B cell (primary cell): ENCODE measurements at regions of chr1 and their contacts with region 1.

Region 1: DNA sequence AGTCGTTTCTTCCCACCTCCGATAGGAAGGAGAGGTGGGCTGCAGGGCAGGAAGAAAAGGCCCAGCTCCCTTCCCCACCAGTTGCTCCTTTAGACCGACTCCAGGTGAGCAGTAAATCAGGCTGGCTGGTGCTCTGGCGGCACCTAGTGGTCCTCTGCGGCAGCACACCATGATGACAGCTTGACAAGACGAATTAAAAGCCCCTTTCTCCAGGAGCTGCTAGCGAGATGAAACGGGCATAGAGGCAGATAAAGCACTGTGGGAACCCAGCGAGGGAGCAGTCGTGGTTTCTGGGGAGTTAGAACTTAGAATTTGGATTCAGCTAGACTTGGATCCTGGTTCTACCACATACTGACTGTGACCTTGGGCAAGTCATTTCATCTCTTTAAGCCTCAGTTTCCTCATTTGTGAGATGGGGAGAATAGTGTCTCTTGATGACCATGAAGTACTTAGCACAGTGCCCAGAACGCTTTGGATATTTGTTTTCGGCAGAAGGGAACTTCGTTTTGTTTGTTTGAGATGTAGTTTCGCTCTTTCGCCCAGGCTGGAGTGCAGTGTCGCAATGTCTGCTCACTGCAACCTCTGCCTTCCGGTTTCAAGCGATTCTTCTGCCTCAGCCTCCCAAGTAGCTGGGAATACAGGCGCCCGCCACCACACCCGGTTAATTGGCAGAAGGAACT is 21.8 kb upstream of the COL9A2 start:
- DNase-seq: peak; percentile 92
- ATAC-seq: peak; percentile 98
- H3K4me3 ChIP-seq: peak overlapping the region in 3 of 5 experiments; percentile 3 to 46 (median 6)
- H3K4me3 Mint-ChIP-seq: peak overlapping the region; percentile 38
- H3K27ac ChIP-seq: no peak overlapping the region
- H3K27ac Mint-ChIP-seq: peak overlapping the region; percentile 28
- H3K4me1 ChIP-seq: peaks cover 25 to 34% of the 10 kb centered on the region in 2 donors
- H3K4me1 Mint-ChIP-seq: peaks cover 39% of the 10 kb centered on the region
- H3K27me3 ChIP-seq: no peaks in the 10 kb centered on the region
- H3K27me3 Mint-ChIP-seq: no peaks in the 10 kb centered on the region
- CTCF ChIP-seq: peak; percentile 98

Region 2: DNA sequence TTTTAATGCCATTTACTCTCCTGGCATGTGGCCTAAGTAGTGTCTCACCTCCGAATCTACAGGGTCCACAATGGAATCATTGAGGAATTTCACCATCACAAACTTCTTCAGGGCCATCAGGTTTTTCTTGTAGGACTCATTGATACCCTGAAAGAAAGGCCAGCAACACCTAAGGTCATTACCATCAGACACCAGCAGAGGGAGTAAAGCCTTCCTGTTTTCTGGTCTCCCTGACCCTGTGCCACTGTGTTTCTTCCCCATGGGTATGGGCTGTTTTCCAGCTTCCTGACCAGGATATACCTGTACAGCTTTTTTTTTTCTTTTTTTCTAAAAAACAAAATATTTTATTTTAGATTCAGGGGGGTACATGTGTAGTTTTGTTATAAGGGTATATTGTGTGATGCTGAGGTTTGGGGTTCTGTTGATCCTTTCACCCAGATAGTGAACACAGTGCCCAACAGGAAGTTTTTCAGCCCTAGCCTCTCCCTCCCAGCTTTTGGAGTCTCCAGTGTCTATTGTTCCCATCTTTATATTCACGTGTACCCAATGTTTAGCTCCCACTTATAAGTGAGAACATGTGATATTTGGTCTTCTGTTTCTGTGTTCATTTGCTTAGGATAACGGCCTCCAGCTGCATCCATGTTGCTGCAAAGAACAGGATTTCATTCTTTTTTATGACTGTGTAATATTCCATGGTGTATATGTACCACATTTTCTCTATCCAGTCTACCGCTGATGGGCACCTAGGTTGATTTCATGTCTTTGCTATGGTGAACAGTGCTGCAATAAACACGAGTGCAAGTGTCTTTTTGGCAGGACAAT is 260.2 kb before region 1 on chr1:
- CTCF ChIA-PET with region 1: interaction called, 111 read pairs
- POLR2A ChIA-PET with region 1: no interaction called
- intact Hi-C with region 1: no loop called
- DNase-seq: peak; percentile 74
- ATAC-seq: peak; percentile 87
- H3K4me3 ChIP-seq: no peak overlapping the region
- H3K4me3 Mint-ChIP-seq: no peak overlapping the region
- H3K27ac ChIP-seq: no peak overlapping the region
- H3K27ac Mint-ChIP-seq: no peak overlapping the region
- H3K4me1 ChIP-seq: peaks cover 10 to 21% of the 10 kb centered on the region in 2 donors
- H3K4me1 Mint-ChIP-seq: peaks cover 19% of the 10 kb centered on the region
- H3K27me3 ChIP-seq: no peaks in the 10 kb centered on the region
- H3K27me3 Mint-ChIP-seq: no peaks in the 10 kb centered on the region
- CTCF ChIP-seq: peak; percentile 93

Region 3: DNA sequence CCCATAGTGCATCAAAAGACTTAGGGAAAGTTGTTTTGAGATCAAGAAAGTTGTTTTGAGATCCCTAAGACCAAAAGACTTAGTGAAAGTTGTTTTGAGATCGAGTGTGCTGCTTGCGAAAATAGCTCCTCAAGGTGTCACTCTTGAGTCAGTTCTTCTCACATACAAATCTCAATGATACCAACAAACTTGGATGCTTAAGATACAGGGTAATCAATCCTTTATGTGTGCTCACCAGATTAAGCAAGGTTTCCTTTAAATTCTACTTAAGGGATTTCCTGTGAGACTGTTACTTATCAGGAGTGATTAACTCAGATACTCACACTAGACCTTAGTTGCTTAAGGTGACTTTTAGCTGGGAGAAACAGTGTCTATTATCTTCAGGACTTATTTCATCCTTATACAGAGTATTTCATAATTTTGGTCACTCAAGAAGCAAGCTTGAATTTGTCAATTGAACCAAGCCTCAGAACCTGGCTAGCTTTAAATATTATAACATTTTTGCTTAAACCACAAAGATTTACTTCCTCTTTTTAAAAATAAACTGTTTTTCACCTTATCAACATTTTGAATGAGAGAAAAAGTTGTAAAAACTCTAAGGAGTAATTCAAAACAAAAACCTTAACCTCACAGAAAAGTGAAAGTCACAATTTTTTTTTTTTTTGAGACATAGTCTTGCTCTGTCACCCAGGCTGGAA is 185.7 kb before region 1 on chr1:
- CTCF ChIA-PET with region 1: interaction called, 272 read pairs
- POLR2A ChIA-PET with region 1: interaction called, 11 read pairs
- intact Hi-C with region 1: loop called (anchors 1 kb)
- DNase-seq: peak; percentile 83
- ATAC-seq: peak; percentile 79
- H3K4me3 ChIP-seq: peak overlapping the region in 4 of 5 experiments; percentile 29 to 60 (median 31)
- H3K4me3 Mint-ChIP-seq: peak overlapping the region; percentile 80
- H3K27ac ChIP-seq: peak overlapping the region; percentile 79 to 82
- H3K27ac Mint-ChIP-seq: peak overlapping the region; percentile 95
- H3K4me1 ChIP-seq: peaks cover 21 to 22% of the 10 kb centered on the region in 2 donors
- H3K4me1 Mint-ChIP-seq: peaks cover 25% of the 10 kb centered on the region
- H3K27me3 ChIP-seq: no peaks in the 10 kb centered on the region
- H3K27me3 Mint-ChIP-seq: no peaks in the 10 kb centered on the region
- CTCF ChIP-seq: peak; percentile 82

Region 4: DNA sequence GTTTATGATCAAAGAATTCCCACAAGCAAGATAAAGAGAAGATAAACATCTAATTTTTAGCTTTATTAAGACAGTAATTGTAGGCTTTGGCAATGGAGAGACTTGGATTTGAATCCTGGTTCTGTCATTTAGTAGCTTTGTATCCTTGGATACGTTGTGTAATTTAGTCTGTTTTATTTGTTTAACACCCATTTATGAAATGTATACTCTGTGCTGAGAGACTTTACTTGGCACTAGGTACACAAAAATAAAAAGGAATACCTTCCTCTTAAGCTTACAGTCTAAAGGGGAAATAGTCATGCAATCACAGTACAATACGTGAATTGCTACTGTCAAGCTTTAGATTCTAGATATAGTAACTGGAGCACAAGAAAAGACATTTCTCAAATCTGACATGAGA is 57.0 kb before region 1 on chr1:
- CTCF ChIA-PET with region 1: interaction called, 15 read pairs
- POLR2A ChIA-PET with region 1: no interaction called
- intact Hi-C with region 1: no loop called
- DNase-seq: no peak
- ATAC-seq: no peak
- H3K4me3 ChIP-seq: no peak overlapping the region
- H3K4me3 Mint-ChIP-seq: no peak overlapping the region
- H3K27ac ChIP-seq: no peak overlapping the region
- H3K27ac Mint-ChIP-seq: no peak overlapping the region
- H3K4me1 ChIP-seq: no peaks in the 10 kb centered on the region
- H3K4me1 Mint-ChIP-seq: no peaks in the 10 kb centered on the region
- H3K27me3 ChIP-seq: no peaks in the 10 kb centered on the region
- H3K27me3 Mint-ChIP-seq: no peaks in the 10 kb centered on the region
- CTCF ChIP-seq: no peak

Region 5: DNA sequence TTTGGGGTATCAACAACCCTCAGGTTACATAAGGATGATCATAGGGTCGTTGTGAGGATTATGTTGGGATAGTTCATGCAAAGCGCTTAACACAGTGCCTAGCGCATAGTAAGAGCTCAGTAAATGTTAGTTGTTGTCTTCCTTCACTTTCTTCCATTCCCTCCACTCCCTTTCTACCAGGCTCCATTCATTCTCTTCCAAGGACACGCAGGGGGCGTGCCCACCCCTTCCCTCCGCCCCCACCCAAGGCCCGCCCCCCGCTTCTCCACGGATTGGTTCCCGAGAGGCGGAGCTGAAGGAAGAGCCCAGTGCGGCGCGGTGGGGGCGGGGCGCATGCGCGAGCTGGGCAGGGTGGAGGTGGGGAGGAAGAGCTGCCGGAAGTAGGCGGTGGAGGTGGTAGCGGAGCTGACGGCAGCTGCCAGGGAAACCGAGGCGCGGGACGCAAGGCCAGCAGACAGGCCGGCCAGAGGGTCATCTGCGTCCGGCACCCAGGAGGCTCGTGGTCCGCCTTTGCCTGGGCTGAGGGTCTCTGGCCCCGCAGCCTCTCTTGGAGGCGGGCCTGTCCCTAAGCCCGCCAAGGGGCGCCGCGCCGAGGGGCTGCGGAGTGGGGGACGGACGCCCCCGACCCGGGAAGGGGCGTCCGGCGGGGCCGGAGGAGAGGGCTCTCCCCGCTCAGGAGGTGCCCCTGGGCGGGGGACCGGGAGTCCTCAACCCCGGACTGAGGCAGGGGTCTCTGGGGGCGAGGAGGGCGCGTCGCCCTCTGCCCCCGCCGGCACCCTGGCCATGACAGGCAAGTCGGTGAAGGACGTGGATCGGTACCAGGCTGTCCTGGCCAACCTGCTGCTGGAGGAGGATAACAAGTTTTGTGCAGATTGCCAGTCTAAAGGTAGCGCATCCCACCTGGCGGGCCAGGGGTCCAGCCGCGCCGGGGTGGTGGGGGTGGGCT is 34.7 kb after region 1 on chr1 and contains the start of gene SMAP2:
- CTCF ChIA-PET with region 1: interaction called, 17 read pairs
- POLR2A ChIA-PET with region 1: interaction called, 7 read pairs
- intact Hi-C with region 1: no loop called
- DNase-seq: peak; percentile 95
- ATAC-seq: peak; percentile 88
- H3K4me3 ChIP-seq: peak within 1 kb of the TSS; percentile 76 to 100 (median 97)
- H3K4me3 Mint-ChIP-seq: peak within 1 kb of the TSS; percentile 96
- H3K27ac ChIP-seq: peak within 1 kb of the TSS; percentile 89 to 100
- H3K27ac Mint-ChIP-seq: peak within 1 kb of the TSS; percentile 95
- H3K4me1 ChIP-seq: peaks cover 36 to 37% of the 10 kb centered on the region in 2 donors
- H3K4me1 Mint-ChIP-seq: peaks cover 48% of the 10 kb centered on the region
- H3K27me3 ChIP-seq: no peaks in the 10 kb centered on the region
- H3K27me3 Mint-ChIP-seq: no peaks in the 10 kb centered on the region
- CTCF ChIP-seq: no peak
- total RNA-seq, gene SMAP2: 300 and 305 TPM in 2 replicates

Region 6: GRCh38 chr1:40411294-40411693 is 72.4 kb after region 1 on chr1:
- CTCF ChIA-PET with region 1: interaction called, 304 read pairs
- POLR2A ChIA-PET with region 1: no interaction called
- intact Hi-C with region 1: no loop called
- DNase-seq: no peak
- ATAC-seq: no peak
- H3K4me3 ChIP-seq: no peak overlapping the region
- H3K4me3 Mint-ChIP-seq: no peak overlapping the region
- H3K27ac ChIP-seq: no peak overlapping the region
- H3K27ac Mint-ChIP-seq: no peak overlapping the region
- H3K4me1 ChIP-seq: no peaks in the 10 kb centered on the region
- H3K4me1 Mint-ChIP-seq: peaks cover 10% of the 10 kb centered on the region
- H3K27me3 ChIP-seq: no peaks in the 10 kb centered on the region
- H3K27me3 Mint-ChIP-seq: no peaks in the 10 kb centered on the region
- CTCF ChIP-seq: no peak

Region 7: GRCh38 chr1:40650075-40650474 is 311.2 kb after region 1 on chr1:
- CTCF ChIA-PET with region 1: no interaction called
- POLR2A ChIA-PET with region 1: no interaction called
- intact Hi-C with region 1: no loop called
- DNase-seq: no peak
- ATAC-seq: peak; percentile 47
- H3K4me3 ChIP-seq: no peak overlapping the region
- H3K4me3 Mint-ChIP-seq: no peak overlapping the region
- H3K27ac ChIP-seq: no peak overlapping the region
- H3K27ac Mint-ChIP-seq: no peak overlapping the region
- H3K4me1 ChIP-seq: no peaks in the 10 kb centered on the region
- H3K4me1 Mint-ChIP-seq: peaks cover 3% of the 10 kb centered on the region
- H3K27me3 ChIP-seq: peaks cover 0 to 4% (median 1%) of the 10 kb centered on the region in 4 experiments
- H3K27me3 Mint-ChIP-seq: peaks cover 23% of the 10 kb centered on the region
- CTCF ChIP-seq: peak; percentile 43